A549 (cell line): ENCODE measurements at regions of chr19 and their contacts with region 1.

Region 1: GRCh38 chr19:48530066-48530720 is 18.6 kb upstream of the LMTK3 start:
- DNase-seq: no peak
- ATAC-seq: 0 out of 6 replicates have a peak, but pooled peaks of 1 of the 2 experiments have one; percentile 13
- H3K4me3 ChIP-seq: no peak overlapping the region
- H3K27ac ChIP-seq: no peak overlapping the region
- H3K4me1 ChIP-seq: no peaks in the 10 kb centered on the region
- CTCF ChIP-seq: no peak
- EP300 ChIP-seq: no peak
- POLR2A ChIP-seq: no peak
- RAD21 ChIP-seq: no peak

Region 2: DNA sequence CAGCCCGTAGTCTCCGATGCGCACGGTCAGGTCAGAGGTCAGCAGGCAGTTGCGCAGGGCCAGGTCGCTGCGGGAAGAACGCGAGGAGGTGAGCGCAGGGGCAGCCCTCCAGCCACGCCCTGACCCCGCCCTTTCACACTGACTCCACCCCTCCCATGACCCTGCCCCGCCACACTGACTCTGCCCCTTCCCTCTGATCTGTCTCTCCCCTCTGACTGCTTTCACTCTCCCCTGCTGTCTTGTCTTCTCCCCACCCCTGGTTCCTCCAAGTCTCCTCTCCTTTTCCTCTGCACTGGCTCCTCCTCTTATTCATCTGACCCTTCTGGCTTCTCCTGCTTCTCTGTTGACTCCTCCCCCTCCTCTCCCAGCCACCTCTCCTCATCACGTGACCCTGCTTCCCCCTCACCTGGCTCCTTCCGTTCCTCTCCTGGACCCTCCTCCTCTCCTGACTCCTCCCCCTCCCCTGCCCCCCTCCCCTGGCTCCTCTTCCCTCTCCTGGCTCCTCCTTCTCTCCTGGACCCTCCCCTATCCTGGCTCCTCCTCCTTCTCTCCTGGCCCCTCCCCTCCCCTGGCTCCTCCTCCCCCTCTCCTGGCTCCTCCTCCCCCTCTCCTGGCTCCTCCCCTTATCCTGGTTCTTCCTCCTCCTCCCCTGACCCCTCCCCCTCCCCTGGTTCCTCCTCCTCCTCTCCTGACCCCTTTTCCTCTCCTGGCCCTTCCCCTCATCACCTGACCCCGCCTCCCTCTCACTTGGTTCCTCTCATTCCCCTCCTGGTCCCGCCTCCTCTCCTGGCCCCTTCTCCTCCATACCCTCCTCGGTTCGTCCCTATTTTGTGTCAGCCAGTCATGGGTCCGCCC is 28.5 kb before region 1 on chr19:
- CTCF ChIA-PET with region 1: interaction called, 30 read pairs
- POLR2A ChIA-PET with region 1: no interaction called
- DNase-seq: peak; percentile 98 to 99
- ATAC-seq: peak; percentile 77 to 84
- H3K4me3 ChIP-seq: peak overlapping the region; percentile 45
- H3K27ac ChIP-seq: peak overlapping the region; percentile 72 to 85
- H3K4me1 ChIP-seq: peaks cover 20% of the 10 kb centered on the region
- CTCF ChIP-seq: no peak
- EP300 ChIP-seq: no peak
- POLR2A ChIP-seq: peak; percentile 17; the same call in 1 of the 2 replicates
- RAD21 ChIP-seq: no peak